Activated naive CD4-positive, alpha-beta T cell treated with anti-CD3 and anti-CD28 coated beads for 36 hours (primary cell): ENCODE measurements at regions of chr10 and their contacts with region 1.

Region 1: GRCh38 chr10:27513451-27514191 is 9.5 kb downstream of the RAB18 start:
- DNase-seq: peak; percentile 42
- H3K4me3 Mint-ChIP-seq: no peak overlapping the region
- H3K27ac Mint-ChIP-seq: peak overlapping the region; percentile 84
- H3K4me1 Mint-ChIP-seq: peaks cover 56% of the 10 kb centered on the region
- H3K27me3 Mint-ChIP-seq: no peaks in the 10 kb centered on the region

Region 2: GRCh38 chr10:27531336-27531848 is 17.8 kb after region 1 on chr10:
- CTCF ChIA-PET with region 1: interaction called, 3 read pairs
- intact Hi-C with region 1: loop called (anchors 2 kb)
- DNase-seq: no peak
- H3K4me3 Mint-ChIP-seq: no peak overlapping the region
- H3K27ac Mint-ChIP-seq: peak overlapping the region; percentile 47
- H3K4me1 Mint-ChIP-seq: peaks cover 38% of the 10 kb centered on the region
- H3K27me3 Mint-ChIP-seq: no peaks in the 10 kb centered on the region